Cardiac septum (tissue), 1 donor: ENCODE measurements at regions of chr9 and their contacts with region 1.

Region 1: GRCh38 chr9:136485049-136486045 is 2.5 kb upstream of the SEC16A start:
- DNase-seq: peak; percentile 93

Region 2: GRCh38 chr9:136631038-136632000 is 146.0 kb after region 1 on chr9:
- intact Hi-C with region 1: loop called (anchors 1 kb)
- DNase-seq: peak; percentile 88